A673 (cell line): ENCODE measurements at regions of chr5 and their contacts with region 1.

Region 1: GRCh38 chr5:128667152-128667551 is 129.1 kb upstream of the FBN2 start:
- DNase-seq: peak; percentile 10
- H3K4me3 ChIP-seq: no peak overlapping the region
- H3K27ac ChIP-seq: no peak overlapping the region
- H3K4me1 ChIP-seq: no peaks in the 10 kb centered on the region
- H3K27me3 ChIP-seq: no peaks in the 10 kb centered on the region
- CTCF ChIP-seq: peak; percentile 28; the same call in 1 of the 2 replicates

Region 2: GRCh38 chr5:128477944-128478343 is 189.2 kb before region 1 on chr5:
- CTCF ChIA-PET with region 1: no interaction called
- POLR2A ChIA-PET with region 1: no interaction called
- intact Hi-C with region 1: no loop called
- DNase-seq: no peak
- H3K4me3 ChIP-seq: no peak overlapping the region
- H3K27ac ChIP-seq: no peak overlapping the region
- H3K4me1 ChIP-seq: no peaks in the 10 kb centered on the region
- H3K27me3 ChIP-seq: no peaks in the 10 kb centered on the region
- CTCF ChIP-seq: no peak

Region 3: GRCh38 chr5:128844354-128844923 is 177.3 kb after region 1 on chr5:
- CTCF ChIA-PET with region 1: no interaction called
- POLR2A ChIA-PET with region 1: no interaction called
- intact Hi-C with region 1: loop called (anchors 5 kb)
- DNase-seq: peak; percentile 42
- H3K4me3 ChIP-seq: no peak overlapping the region
- H3K27ac ChIP-seq: no peak overlapping the region
- H3K4me1 ChIP-seq: no peaks in the 10 kb centered on the region
- H3K27me3 ChIP-seq: no peaks in the 10 kb centered on the region
- CTCF ChIP-seq: peak; percentile 45